PC-9 (cell line): ENCODE measurements at regions of chr4 and their contacts with region 1.

Region 1: GRCh38 chr4:185987961-185988627 is 80.9 kb upstream of the TLR3 start:
- DNase-seq: no peak
- H3K4me3 ChIP-seq: no peak overlapping the region
- H3K27ac ChIP-seq: no peak overlapping the region
- H3K4me1 ChIP-seq: no peaks in the 10 kb centered on the region
- H3K27me3 ChIP-seq: no peaks in the 10 kb centered on the region
- CTCF ChIP-seq: no peak

Region 2: DNA sequence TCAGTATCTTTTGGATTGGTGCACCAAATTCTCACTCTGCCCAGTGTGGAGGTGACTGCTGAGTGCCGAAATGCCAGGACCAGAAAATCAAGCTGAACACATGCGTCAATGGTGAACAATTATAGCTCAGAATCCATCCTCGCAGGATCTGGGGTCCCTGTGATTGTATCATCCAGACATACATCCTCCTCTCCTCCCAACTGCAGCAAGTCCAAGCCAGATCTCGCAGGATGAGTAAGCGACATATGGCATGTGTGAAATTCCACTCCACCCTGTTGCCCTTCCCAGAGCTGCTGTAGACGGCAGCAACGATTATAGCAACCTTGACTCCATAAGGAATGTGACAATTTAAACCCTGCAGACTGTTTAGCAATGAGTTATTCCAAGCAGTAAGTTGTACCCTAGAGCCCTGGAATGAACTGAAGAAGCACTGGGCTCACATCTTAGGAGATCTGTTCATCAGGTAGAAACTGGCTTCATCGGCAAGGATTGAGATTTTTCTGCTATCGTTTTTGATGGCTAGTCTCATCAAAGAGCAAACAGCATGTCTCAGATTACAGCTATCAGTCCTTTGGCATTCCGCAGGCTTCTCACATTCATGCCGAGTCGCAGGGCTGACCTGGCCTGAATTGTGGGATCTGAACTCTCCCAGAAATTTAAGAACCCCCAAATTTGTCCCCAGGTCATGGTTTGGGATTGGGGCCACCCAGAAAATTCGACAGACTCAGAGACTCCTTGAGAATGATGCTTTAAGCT is 140.6 kb before region 1 on chr4:
- CTCF ChIA-PET with region 1: no interaction called
- POLR2A ChIA-PET with region 1: no interaction called
- intact Hi-C with region 1: no loop called
- DNase-seq: peak in 1 of 2 experiments; percentile 60
- H3K4me3 ChIP-seq: no peak overlapping the region
- H3K27ac ChIP-seq: no peak overlapping the region
- H3K4me1 ChIP-seq: no peaks in the 10 kb centered on the region
- H3K27me3 ChIP-seq: no peaks in the 10 kb centered on the region
- CTCF ChIP-seq: no peak

Region 3: GRCh38 chr4:185998791-185999190 is 10.7 kb after region 1 on chr4:
- CTCF ChIA-PET with region 1: interaction called, 11 read pairs
- POLR2A ChIA-PET with region 1: no interaction called
- intact Hi-C with region 1: no loop called
- DNase-seq: no peak
- H3K4me3 ChIP-seq: no peak overlapping the region
- H3K27ac ChIP-seq: no peak overlapping the region
- H3K4me1 ChIP-seq: no peaks in the 10 kb centered on the region
- H3K27me3 ChIP-seq: no peaks in the 10 kb centered on the region
- CTCF ChIP-seq: no peak